B cell (primary cell): ENCODE measurements at regions of chr13 and their contacts with region 1.

Region 1: DNA sequence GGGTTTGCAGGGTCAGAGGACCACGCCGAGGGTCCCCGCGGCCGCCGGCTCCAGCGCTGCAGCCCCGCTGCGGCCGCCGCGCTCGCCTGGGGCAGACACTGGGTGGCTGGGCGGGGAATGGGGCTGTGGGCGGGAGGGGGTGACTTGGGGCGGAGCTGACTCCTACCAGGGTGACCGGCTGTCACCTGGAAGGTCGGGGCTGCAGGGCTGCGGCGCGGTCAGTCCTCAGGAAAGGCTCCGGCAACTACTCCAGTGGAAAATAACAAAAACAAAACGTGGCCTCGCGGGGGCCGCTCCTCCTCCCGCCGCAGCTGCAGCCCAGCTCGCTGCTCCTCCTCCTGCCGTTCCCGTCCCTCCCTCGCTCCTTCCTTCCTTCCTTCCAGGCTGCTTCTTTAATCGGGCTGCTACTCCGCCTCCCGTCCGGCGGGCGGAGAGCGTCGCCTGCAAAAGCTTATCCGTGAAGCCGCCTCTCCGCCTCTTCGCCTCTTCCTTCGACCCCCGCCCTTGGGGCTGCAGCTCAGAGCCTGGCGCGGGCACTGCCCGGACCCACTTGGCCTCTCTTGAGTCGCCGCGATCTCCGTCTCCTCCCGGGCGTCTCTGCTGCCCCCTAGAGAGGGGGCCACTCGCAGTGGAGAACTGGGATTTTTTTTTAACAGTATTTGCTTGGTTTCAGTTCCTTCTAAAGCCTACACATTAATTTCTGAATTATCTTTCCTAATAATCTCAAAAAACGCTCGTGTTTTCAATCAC is at the start of gene TBC1D4:
- DNase-seq: peak; percentile 81
- ATAC-seq: peak; percentile 85
- H3K4me3 ChIP-seq: peak within 1 kb of the TSS; percentile 31 to 83 (median 65)
- H3K4me3 Mint-ChIP-seq: peak within 1 kb of the TSS; percentile 100
- H3K27ac ChIP-seq: no peak within 1 kb of the TSS
- H3K27ac Mint-ChIP-seq: peak within 1 kb of the TSS; percentile 76
- H3K4me1 ChIP-seq: peaks cover 12 to 14% of the 10 kb centered on the region in 2 donors
- H3K4me1 Mint-ChIP-seq: peaks cover 15% of the 10 kb centered on the region
- H3K27me3 ChIP-seq: peaks cover 0 to 50% (median 31%) of the 10 kb centered on the region in 4 experiments
- H3K27me3 Mint-ChIP-seq: peaks cover 57% of the 10 kb centered on the region
- CTCF ChIP-seq: peak; percentile 90
- total RNA-seq, gene TBC1D4: 1.3 and 1.6 TPM in 2 replicates

Region 2: GRCh38 chr13:75372517-75372916 is 109.7 kb before region 1 on chr13:
- CTCF ChIA-PET with region 1: interaction called, 5 read pairs
- POLR2A ChIA-PET with region 1: no interaction called
- intact Hi-C with region 1: loop called (anchors 1 kb)
- DNase-seq: peak; percentile 48
- ATAC-seq: peak; percentile 58
- H3K4me3 ChIP-seq: no peak overlapping the region
- H3K4me3 Mint-ChIP-seq: no peak overlapping the region
- H3K27ac ChIP-seq: no peak overlapping the region
- H3K27ac Mint-ChIP-seq: no peak overlapping the region
- H3K4me1 ChIP-seq: no peaks in the 10 kb centered on the region
- H3K4me1 Mint-ChIP-seq: no peaks in the 10 kb centered on the region
- H3K27me3 ChIP-seq: no peaks in the 10 kb centered on the region
- H3K27me3 Mint-ChIP-seq: peaks cover 7% of the 10 kb centered on the region
- CTCF ChIP-seq: peak; percentile 77

Region 3: GRCh38 chr13:75537401-75538365 is 55.4 kb after region 1 on chr13 and contains the start of gene COMMD6:
- CTCF ChIA-PET with region 1: interaction called, 5 read pairs
- POLR2A ChIA-PET with region 1: no interaction called
- intact Hi-C with region 1: loop called (anchors 1 kb)
- DNase-seq: peak; percentile 86
- ATAC-seq: peak; percentile 94
- H3K4me3 ChIP-seq: peak within 1 kb of the TSS; percentile 70 to 92 (median 86)
- H3K4me3 Mint-ChIP-seq: peak within 1 kb of the TSS; percentile 100
- H3K27ac ChIP-seq: peak within 1 kb of the TSS; percentile 56 to 75
- H3K27ac Mint-ChIP-seq: peak within 1 kb of the TSS; percentile 97
- H3K4me1 ChIP-seq: peaks cover 12 to 22% of the 10 kb centered on the region in 2 donors
- H3K4me1 Mint-ChIP-seq: peaks cover 43% of the 10 kb centered on the region
- H3K27me3 ChIP-seq: no peaks in the 10 kb centered on the region
- H3K27me3 Mint-ChIP-seq: no peaks in the 10 kb centered on the region
- CTCF ChIP-seq: peak; percentile 46
- total RNA-seq, gene COMMD6: 152 and 153 TPM in 2 replicates

Region 4: DNA sequence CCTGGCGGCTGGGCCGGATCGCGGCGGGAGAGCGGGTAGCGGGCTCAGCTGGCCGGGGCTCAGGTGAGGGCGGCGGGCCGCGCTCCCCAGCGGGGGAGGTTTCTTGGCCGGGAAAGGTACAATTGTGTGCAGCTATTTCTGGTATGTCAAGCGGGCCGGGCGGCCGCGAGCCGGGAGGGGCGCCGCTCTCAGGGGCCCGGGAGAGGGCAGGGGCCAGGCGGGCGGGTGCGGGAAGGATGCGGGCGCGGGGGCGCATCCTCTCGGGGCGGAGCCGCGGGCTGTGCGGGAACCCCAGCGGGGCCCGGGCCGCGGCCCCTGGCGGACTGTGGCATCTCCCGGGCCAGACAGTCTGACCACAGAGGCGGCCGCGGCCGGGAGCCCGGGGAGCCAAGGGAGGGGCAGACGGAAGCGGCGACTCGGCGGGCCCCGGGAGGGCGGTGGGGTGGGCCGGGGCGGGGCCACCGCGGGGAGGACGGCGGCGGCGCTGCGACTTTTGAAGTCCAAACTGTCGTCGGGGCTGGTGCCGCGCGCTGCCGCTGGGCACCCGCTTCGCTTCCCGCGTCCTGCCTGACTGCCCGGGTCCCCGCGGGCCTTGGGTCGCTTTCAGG is 153.7 kb after region 1 on chr13 and contains the start of gene LMO7:
- CTCF ChIA-PET with region 1: no interaction called
- POLR2A ChIA-PET with region 1: no interaction called
- intact Hi-C with region 1: loop called (anchors 5 kb)
- DNase-seq: no peak
- ATAC-seq: peak; percentile 68
- H3K4me3 ChIP-seq: peak within 1 kb of the TSS; percentile 48 to 86 (median 80)
- H3K4me3 Mint-ChIP-seq: peak within 1 kb of the TSS; percentile 87
- H3K27ac ChIP-seq: peak within 1 kb of the TSS in 1 of 2 donors; percentile 39
- H3K27ac Mint-ChIP-seq: peak within 1 kb of the TSS; percentile 71
- H3K4me1 ChIP-seq: peaks cover 5 to 14% of the 10 kb centered on the region in 2 donors
- H3K4me1 Mint-ChIP-seq: peaks cover 11% of the 10 kb centered on the region
- H3K27me3 ChIP-seq: peaks cover 0 to 5% (median 0%) of the 10 kb centered on the region in 4 experiments
- H3K27me3 Mint-ChIP-seq: peaks cover 9% of the 10 kb centered on the region
- CTCF ChIP-seq: no peak
- total RNA-seq, gene LMO7: 17.4 and 21.5 TPM in 2 replicates